A549 (cell line): ENCODE measurements at regions of chr5 and their contacts with region 1.

Region 1: GRCh38 chr5:172764849-172765765 is 5.9 kb downstream of the DUSP1 start:
- DNase-seq: peak; percentile 98 to 100
- ATAC-seq: peak; percentile 60 to 64
- H3K4me3 ChIP-seq: peak overlapping the region; percentile 23
- H3K27ac ChIP-seq: peak overlapping the region; percentile 97 to 100
- H3K4me1 ChIP-seq: peaks cover 15% of the 10 kb centered on the region
- CTCF ChIP-seq: no peak
- EP300 ChIP-seq: peak in 1 of 2 experiments; percentile 73; a peak in 1 of 5 replicates
- POLR2A ChIP-seq: no peak
- RAD21 ChIP-seq: peak in 1 of 2 experiments; percentile 39; a peak in 2 of 5 replicates

Region 2: DNA sequence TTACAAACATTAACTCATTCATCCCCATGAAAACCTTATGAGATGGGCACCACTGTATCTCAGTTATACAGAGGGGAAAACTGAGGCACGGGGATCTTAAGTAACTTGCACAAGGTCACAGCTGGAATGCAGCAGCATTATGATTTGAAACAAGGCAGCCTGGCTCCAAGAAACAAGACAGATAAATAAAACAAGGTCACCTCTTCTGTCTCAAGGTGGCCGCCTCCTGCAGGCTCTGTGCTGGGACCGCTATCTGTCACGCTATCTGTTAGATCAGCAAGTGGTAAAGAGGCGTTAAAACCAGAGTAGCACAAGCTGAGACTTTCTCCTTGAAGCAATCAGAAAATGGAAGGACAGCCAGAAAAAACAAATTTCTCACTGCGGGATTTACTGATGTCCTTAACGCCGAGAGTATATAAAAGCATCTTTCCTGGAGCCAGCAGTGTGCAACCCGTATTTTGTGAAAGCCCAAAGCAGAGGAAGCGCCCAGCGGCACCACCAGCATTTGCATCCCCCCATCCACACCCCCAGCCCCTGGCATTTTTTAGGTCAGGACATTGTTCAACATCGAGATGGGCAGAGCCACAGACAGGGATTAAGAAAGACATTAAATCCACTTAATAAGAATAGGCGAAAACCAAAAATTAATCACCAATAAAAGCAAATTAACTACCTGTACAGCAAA is 42.8 kb before region 1 on chr5:
- CTCF ChIA-PET with region 1: interaction called, 53 read pairs
- POLR2A ChIA-PET with region 1: interaction called, 22 read pairs
- DNase-seq: no peak
- ATAC-seq: no peak
- H3K4me3 ChIP-seq: no peak overlapping the region
- H3K27ac ChIP-seq: peak overlapping the region in 1 of 2 experiments; percentile 68; a peak in 3 of 6 replicates
- H3K4me1 ChIP-seq: peaks cover 13% of the 10 kb centered on the region
- CTCF ChIP-seq: no peak
- EP300 ChIP-seq: no peak
- POLR2A ChIP-seq: no peak
- RAD21 ChIP-seq: no peak

Region 3: GRCh38 chr5:172740428-172741201 is 24.5 kb before region 1 on chr5:
- CTCF ChIA-PET with region 1: interaction called, 4 read pairs
- POLR2A ChIA-PET with region 1: interaction called, 17 read pairs
- DNase-seq: peak; percentile 65 to 80
- ATAC-seq: peak; percentile 95 to 96
- H3K4me3 ChIP-seq: no peak overlapping the region
- H3K27ac ChIP-seq: peak overlapping the region; percentile 73 to 86
- H3K4me1 ChIP-seq: peaks cover 20% of the 10 kb centered on the region
- CTCF ChIP-seq: no peak
- EP300 ChIP-seq: no peak
- POLR2A ChIP-seq: no peak
- RAD21 ChIP-seq: no peak

Region 4: DNA sequence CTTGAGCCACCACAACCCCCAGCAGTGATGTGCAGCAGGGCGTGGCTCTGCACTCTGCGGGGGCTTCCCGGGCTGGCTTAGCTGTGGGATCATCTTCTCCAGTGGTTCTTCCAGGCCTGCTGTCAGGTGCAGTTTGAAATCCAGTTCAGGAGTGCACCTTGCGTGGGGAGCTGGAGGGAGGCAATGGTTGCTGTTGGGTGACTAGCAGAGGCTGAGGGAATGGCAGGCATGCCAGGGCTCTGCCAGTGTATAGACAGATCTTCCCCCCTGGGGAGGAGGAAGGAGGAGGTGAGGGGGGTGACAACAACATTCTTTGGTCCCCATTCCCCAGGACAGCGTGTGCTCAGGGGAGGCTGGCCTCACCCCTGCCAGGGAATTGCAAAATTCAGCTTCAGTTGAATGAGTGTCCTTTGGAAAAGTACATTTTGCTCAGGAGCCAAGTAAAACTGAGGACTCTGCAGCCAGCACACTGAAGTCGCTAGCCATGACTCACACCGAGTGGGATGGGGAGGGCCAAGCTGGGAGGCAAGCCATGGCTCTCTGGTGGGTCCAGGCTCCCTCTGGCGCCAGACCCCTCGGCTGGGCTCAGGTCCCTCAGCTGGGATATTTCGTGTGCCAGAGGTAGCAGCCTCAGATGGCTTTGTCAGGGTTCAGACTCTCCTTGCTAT is 104.0 kb after region 1 on chr5:
- CTCF ChIA-PET with region 1: interaction called, 6 read pairs
- POLR2A ChIA-PET with region 1: interaction called, 61 read pairs
- DNase-seq: peak; percentile 83 to 93
- ATAC-seq: peak; percentile 79 to 80
- H3K4me3 ChIP-seq: 0 out of 3 replicates have a peak overlapping the region, but pooled peaks have one; percentile 18
- H3K27ac ChIP-seq: peak overlapping the region; percentile 96 to 99
- H3K4me1 ChIP-seq: peaks cover 95% of the 10 kb centered on the region
- CTCF ChIP-seq: no peak; the same call in 2 of the 3 replicates
- EP300 ChIP-seq: peak; percentile 91 to 95; a peak in 4 of 5 replicates
- POLR2A ChIP-seq: no peak
- RAD21 ChIP-seq: peak; percentile 55 to 70

Region 5: GRCh38 chr5:172897481-172898217 is 132.5 kb after region 1 on chr5:
- CTCF ChIA-PET with region 1: interaction called, 131 read pairs
- POLR2A ChIA-PET with region 1: interaction called, 87 read pairs
- DNase-seq: peak; percentile 90 to 96
- ATAC-seq: peak; percentile 55 to 73
- H3K4me3 ChIP-seq: 0 out of 3 replicates have a peak overlapping the region, but pooled peaks have one; percentile 10
- H3K27ac ChIP-seq: peak overlapping the region; percentile 99 to 100
- H3K4me1 ChIP-seq: peaks cover 87% of the 10 kb centered on the region
- CTCF ChIP-seq: no peak
- EP300 ChIP-seq: peak; percentile 99 to 100
- POLR2A ChIP-seq: no peak
- RAD21 ChIP-seq: peak; percentile 8 to 53; a peak in 2 of 5 replicates

Region 6: DNA sequence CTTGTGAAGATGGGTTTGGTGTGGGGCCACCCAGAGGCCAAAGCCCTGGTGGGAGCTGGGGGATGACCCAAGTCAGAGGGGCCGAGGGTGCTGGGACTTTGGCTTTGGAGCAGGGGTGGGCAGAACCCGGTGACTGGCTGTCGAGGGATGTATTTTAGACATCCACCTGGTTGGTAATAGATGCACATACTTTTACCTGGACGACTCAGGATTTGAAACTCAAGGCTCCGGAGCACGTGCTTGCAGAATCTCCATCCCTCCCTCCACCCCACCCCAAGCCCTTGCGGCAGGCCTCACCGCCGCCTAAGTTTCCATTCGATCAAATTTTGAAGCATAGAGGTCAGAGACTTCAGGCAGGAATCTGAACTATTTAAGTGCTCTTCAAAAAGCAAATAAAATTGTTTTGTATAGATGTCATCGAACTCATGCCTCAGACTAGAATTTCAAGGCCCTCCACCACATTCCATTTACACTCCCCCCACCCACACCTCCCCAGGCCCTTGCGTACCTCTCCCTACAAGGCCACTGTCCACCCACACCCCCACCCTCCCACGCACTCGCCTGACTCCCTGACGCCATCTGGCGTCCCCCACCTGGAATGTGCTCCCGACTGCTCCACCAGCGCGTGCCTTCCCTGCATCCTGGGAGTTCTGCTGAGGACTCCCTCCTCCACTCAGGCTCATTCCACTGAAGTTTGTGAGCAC is 137.5 kb after region 1 on chr5:
- CTCF ChIA-PET with region 1: interaction called, 131 read pairs
- POLR2A ChIA-PET with region 1: interaction called, 87 read pairs
- DNase-seq: peak; percentile 82 to 99
- ATAC-seq: peak; percentile 48 to 65
- H3K4me3 ChIP-seq: no peak overlapping the region
- H3K27ac ChIP-seq: peak overlapping the region; percentile 99 to 100
- H3K4me1 ChIP-seq: peaks cover 98% of the 10 kb centered on the region
- CTCF ChIP-seq: peak; percentile 60
- EP300 ChIP-seq: peak; percentile 99 to 100; a peak in 4 of 5 replicates
- POLR2A ChIP-seq: no peak
- RAD21 ChIP-seq: peak; percentile 78 to 90